Activated B cell treated with CpG ODN at 0.5 μM for 24 hours (primary cell): ENCODE measurements at regions of chr19 and their contacts with region 1.

Region 1: GRCh38 chr19:51422053-51422448 is 4.6 kb upstream of the SIGLEC10 start:
- DNase-seq: peak; percentile 90
- ATAC-seq: peak; percentile 22
- H3K4me3 Mint-ChIP-seq: no peak overlapping the region
- H3K27ac Mint-ChIP-seq: no peak overlapping the region
- H3K4me1 Mint-ChIP-seq: peaks cover 34% of the 10 kb centered on the region
- H3K27me3 Mint-ChIP-seq: peaks cover 5% of the 10 kb centered on the region
- CTCF ChIP-seq: peak; percentile 90

Region 2: GRCh38 chr19:51352783-51353360 is 69.2 kb before region 1 on chr19:
- CTCF ChIA-PET with region 1: no interaction called
- POLR2A ChIA-PET with region 1: no interaction called
- intact Hi-C with region 1: no loop called
- DNase-seq: no peak
- ATAC-seq: no peak
- H3K4me3 Mint-ChIP-seq: no peak overlapping the region
- H3K27ac Mint-ChIP-seq: no peak overlapping the region
- H3K4me1 Mint-ChIP-seq: peaks cover 1% of the 10 kb centered on the region
- H3K27me3 Mint-ChIP-seq: no peaks in the 10 kb centered on the region
- CTCF ChIP-seq: no peak

Region 3: DNA sequence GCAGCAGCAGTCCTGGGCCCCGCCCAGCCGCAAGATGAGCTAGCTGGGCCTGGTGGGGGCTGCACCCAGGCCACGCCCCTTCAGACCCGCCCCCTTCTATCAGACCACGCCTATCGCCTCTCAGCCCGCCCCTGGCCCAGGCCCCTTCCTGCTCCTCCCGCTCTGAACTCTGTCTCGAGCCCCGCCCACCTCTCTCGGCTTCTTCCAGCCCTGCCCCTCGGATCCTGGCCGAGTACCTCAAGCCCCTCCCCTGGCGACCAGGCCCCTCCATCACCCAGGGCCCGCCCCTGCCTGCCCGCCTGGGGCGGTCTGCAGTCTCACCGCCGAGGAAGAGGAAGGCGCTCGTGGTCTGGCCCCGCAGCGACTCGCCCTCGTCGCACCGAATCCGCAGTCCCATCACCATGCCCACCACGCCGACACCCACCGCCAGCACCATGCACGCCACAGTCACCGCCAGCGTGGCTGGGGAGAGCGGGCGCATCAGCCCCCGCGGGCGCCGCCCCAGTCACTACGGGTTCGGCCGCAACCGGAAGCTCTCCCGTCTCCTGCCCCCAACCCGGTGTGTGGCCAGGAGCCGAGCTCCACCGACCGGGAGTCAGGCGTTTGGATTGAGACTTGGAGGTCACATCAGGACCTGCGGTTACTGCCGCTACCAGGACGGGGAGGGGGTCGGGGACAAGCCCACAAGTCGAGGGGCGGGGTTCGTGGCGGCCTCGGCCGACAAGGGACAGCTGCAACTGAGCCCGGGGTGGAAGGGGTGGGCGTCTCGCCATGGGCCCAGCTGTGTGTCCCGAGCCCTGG is 54.3 kb before region 1 on chr19:
- CTCF ChIA-PET with region 1: interaction called, 6 read pairs
- POLR2A ChIA-PET with region 1: interaction called, 35 read pairs
- intact Hi-C with region 1: loop called (anchors 1 kb)
- DNase-seq: peak; percentile 99
- ATAC-seq: peak; percentile 84
- H3K4me3 Mint-ChIP-seq: peak overlapping the region; percentile 98
- H3K27ac Mint-ChIP-seq: peak overlapping the region; percentile 96
- H3K4me1 Mint-ChIP-seq: peaks cover 36% of the 10 kb centered on the region
- H3K27me3 Mint-ChIP-seq: no peaks in the 10 kb centered on the region
- CTCF ChIP-seq: no peak

Region 4: DNA sequence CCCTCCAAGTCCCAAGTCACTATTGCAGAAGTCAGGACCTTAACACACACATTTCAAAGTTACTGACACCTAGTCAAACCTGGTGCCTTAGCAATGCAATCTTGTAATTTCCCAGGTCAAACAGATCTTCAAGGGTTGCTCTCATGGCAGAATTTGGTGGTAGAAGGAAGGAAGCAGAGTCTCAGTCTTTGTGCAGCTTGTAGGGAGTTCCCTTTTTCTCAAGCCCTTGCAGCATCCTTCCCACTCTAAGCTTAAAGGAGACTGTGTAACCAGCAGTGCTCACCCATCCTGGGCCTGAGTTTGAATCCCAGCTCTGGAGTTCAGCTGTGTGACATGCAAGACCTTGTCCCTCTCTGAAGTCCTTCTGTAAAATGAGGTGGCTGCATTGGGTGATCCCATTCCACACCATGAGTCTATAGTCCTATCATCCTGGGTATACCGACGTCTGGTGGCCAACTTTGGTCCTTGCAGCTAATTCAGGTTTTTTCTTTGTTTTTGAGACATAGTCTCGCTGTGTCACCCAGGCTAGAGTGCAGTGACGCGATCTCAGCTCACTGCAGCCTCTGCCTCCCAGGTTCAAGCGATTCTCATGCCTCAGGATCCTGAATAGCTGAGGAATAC is 14.4 kb before region 1 on chr19:
- CTCF ChIA-PET with region 1: interaction called, 20 read pairs
- POLR2A ChIA-PET with region 1: interaction called, 26 read pairs
- intact Hi-C with region 1: loop called (anchors 1 kb)
- DNase-seq: no peak
- ATAC-seq: peak; percentile 79
- H3K4me3 Mint-ChIP-seq: no peak overlapping the region
- H3K27ac Mint-ChIP-seq: peak overlapping the region; percentile 53
- H3K4me1 Mint-ChIP-seq: peaks cover 28% of the 10 kb centered on the region
- H3K27me3 Mint-ChIP-seq: no peaks in the 10 kb centered on the region
- CTCF ChIP-seq: no peak

Region 5: DNA sequence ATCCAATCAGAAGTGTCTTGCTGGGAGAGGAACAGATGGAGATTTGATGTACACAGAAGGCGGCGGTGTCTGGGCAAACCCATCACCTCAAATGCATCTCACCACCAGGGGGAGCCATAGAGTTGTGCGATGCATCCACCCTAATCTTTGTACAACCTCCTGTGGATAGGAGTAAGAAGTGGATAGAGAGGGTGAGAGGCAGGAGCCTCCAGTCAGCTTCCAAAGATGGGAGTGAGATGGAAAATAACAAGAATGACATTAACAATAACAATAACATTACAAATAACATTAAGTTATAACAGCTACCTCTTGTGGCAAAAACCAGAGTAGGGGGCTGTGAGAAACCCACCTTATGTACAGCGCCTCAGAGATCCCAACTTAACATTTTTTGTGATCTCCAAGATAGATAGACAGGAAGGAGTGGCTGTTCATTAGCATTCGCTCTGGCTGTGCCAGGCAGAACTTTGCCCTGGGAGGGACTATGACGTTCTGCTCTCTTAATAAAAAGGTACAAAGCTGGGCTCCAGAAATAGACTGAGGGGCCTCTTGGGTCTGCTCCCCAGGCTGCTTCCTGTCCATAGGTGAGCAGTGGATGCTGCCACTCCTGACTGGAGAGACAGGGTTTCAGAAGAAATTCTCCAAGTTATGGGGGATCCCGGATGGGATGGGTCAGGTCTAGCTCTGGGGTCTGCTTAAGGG is 51.1 kb after region 1 on chr19:
- CTCF ChIA-PET with region 1: interaction called, 7 read pairs
- POLR2A ChIA-PET with region 1: interaction called, 3 read pairs
- intact Hi-C with region 1: loop called (anchors 2 kb)
- DNase-seq: peak; percentile 56
- ATAC-seq: peak; percentile 67
- H3K4me3 Mint-ChIP-seq: no peak overlapping the region
- H3K27ac Mint-ChIP-seq: no peak overlapping the region
- H3K4me1 Mint-ChIP-seq: peaks cover 10% of the 10 kb centered on the region
- H3K27me3 Mint-ChIP-seq: peaks cover 5% of the 10 kb centered on the region
- CTCF ChIP-seq: peak; percentile 40

Region 6: GRCh38 chr19:51586103-51586728 is 164.2 kb after region 1 on chr19:
- CTCF ChIA-PET with region 1: no interaction called
- POLR2A ChIA-PET with region 1: no interaction called
- intact Hi-C with region 1: no loop called
- DNase-seq: no peak
- ATAC-seq: no peak
- H3K4me3 Mint-ChIP-seq: no peak overlapping the region
- H3K27ac Mint-ChIP-seq: no peak overlapping the region
- H3K4me1 Mint-ChIP-seq: no peaks in the 10 kb centered on the region
- H3K27me3 Mint-ChIP-seq: no peaks in the 10 kb centered on the region
- CTCF ChIP-seq: no peak

Region 7: DNA sequence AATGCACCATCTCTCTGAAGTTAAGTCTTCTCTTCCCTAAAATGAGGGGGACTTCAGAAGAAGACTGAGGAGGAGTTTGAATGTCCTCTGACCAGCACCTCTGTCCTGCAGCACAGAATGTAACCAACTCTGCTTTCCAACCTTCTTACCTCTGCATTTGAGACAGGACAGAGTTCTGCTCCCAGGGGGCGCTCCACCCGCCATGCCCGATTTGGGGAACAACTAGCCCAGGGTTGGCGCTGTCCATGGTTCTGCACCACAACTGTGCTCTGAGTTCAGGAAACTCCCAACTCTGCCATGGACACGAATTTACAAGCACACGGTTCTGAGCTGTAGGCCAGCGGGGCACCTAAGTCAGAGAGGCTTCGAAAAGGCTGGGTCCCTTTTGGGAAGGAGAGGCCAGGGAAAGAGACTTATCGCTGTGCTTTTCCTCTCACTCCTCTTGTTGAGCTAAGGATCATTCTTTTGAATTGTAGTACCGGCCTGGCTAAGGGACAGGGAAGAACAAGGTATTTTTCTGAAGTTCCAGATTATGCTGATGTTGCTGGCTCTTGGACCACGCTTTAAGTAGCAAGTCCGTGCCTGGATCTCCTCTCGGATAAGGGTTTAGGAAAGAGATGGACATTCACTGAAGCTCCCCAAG is 186.0 kb after region 1 on chr19:
- CTCF ChIA-PET with region 1: no interaction called
- POLR2A ChIA-PET with region 1: interaction called, 7 read pairs
- intact Hi-C with region 1: loop called (anchors 2 kb)
- DNase-seq: peak; percentile 54
- ATAC-seq: no peak
- H3K4me3 Mint-ChIP-seq: no peak overlapping the region
- H3K27ac Mint-ChIP-seq: peak overlapping the region; percentile 88
- H3K4me1 Mint-ChIP-seq: peaks cover 63% of the 10 kb centered on the region
- H3K27me3 Mint-ChIP-seq: no peaks in the 10 kb centered on the region
- CTCF ChIP-seq: no peak

Region 8: GRCh38 chr19:51660975-51661600 is 239.0 kb after region 1 on chr19:
- CTCF ChIA-PET with region 1: interaction called, 10 read pairs
- POLR2A ChIA-PET with region 1: interaction called, 7 read pairs
- intact Hi-C with region 1: loop called (anchors 1 kb)
- DNase-seq: peak; percentile 46
- ATAC-seq: peak; percentile 34
- H3K4me3 Mint-ChIP-seq: no peak overlapping the region
- H3K27ac Mint-ChIP-seq: no peak overlapping the region
- H3K4me1 Mint-ChIP-seq: peaks cover 12% of the 10 kb centered on the region
- H3K27me3 Mint-ChIP-seq: peaks cover 18% of the 10 kb centered on the region
- CTCF ChIP-seq: no peak